SK-N-SH (cell line): ENCODE measurements at regions of chr11 and their contacts with region 1.

Region 1: DNA sequence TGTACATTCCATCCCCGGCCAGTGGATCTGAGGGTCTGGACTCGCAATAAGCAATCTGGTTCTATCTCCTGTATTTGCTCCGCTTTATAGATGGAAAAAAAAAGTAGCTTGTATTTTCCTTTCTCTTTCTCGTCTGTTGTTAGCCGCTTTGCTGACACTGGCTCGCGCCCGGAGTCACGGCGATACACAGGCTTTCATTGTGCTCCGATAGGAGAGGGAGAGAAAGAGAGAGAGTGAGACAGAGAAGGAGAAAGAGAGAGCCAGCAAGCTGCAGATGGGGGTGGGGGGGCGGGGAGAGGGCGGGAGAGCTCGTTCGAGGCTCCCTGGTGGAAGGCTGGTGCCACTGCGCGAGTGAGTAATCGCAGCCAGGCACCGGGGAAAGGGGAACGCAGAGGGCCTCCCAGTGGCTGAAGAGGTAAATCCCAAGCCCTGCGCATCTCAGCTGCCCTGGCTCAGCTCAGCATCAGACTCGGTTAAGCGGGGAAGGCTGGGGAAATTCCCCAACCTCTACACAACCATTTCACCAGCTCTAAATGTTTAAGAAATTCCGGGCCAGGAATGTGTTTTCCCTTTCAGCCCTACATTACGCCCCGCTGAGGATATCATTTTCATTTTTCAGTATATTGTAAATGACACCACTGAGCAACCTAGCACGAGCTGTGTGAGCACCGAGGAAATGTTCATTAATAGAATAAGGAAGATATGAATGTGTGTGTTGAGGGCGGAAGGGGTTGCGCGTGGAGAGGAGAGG is at the start of gene MAML2:
- DNase-seq: peak; percentile 94
- H3K4me3 ChIP-seq: peak within 1 kb of the TSS; percentile 84 to 90
- H3K27ac ChIP-seq: peak within 1 kb of the TSS; percentile 82 to 91
- H3K4me1 ChIP-seq: peaks cover 15 to 28% of the 10 kb centered on the region in 2 experiments; a peak in 2 of 4 replicates
- H3K27me3 ChIP-seq: no peaks in the 10 kb centered on the region
- CTCF ChIP-seq: peak; percentile 73
- EP300 ChIP-seq: no peak
- RAD21 ChIP-seq: peak; percentile 91
- polyA plus RNA-seq, gene MAML2: 20.1 and 24.5 TPM in 2 replicates

Region 2: DNA sequence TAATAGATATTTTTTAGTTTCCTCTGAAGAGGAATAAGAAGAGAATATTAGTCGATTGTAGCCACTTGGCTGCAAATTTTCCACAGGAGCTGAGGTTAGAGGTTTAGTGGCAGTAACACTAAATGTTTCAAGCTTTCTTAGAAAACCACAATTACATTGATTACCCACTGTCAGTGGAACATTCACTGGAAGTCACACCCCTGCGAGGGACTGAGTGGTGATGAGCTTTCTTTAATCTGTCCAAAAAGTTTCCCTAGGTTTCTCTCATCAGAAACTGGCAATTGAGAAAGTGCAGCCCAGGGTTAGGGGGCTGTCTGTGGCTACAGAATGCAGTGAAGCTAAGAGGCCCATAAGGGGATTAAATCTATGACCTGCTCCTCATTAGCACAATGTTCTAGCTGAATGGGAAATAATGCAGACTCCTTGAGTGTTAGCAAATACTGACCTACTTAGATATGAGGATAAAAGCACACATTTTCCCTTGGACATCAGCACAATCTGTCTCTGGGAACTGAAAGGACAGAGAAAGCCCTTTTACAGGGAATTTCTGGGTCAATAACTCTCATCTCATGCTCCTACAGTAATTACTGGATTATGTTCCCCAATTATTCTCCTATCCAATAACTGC is 743.1 kb before region 1 on chr11:
- CTCF ChIA-PET with region 1: no interaction called
- POLR2A ChIA-PET with region 1: no interaction called
- DNase-seq: peak; percentile 1
- H3K4me3 ChIP-seq: no peak overlapping the region
- H3K27ac ChIP-seq: no peak overlapping the region
- H3K4me1 ChIP-seq: no peaks in the 10 kb centered on the region; a peak in 1 of 4 replicates
- H3K27me3 ChIP-seq: no peaks in the 10 kb centered on the region
- CTCF ChIP-seq: no peak
- EP300 ChIP-seq: no peak
- RAD21 ChIP-seq: no peak

Region 3: DNA sequence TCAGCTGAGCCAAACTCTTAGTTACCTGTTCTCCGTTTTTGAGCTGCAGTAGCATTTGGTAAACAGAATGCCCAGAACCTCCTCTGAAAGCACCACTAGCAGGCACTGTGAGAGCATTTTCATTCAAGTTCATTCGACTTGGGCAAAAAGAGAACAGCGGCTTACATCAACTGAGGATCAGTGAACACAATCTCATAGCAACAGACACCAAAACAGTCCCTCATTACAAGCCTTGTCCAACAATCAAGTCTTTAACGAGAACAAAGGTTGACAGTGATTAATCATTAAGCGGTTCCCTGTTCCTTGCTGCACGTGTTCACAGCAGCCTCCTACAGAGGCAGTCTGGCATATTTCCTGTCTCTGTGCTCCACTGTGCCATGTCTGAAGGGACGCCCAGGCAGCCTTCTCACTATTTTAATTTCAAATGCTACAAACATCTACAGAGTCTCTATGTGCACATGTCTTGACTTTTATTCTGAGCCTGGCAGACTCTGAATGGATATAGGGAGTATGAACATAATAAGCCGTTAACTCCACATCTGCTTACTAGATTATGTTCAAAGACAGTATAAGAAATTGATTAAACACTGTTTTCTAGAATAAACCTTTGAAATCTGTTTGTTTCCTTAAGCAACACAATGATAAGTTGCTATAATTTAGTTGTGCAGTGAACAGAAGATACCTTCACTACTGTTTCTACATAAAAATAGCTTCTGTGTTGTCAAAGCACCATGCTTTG is 330.9 kb before region 1 on chr11:
- CTCF ChIA-PET with region 1: interaction called, 27 read pairs
- POLR2A ChIA-PET with region 1: no interaction called
- DNase-seq: peak; percentile 59
- H3K4me3 ChIP-seq: no peak overlapping the region; a peak in 1 of 4 replicates
- H3K27ac ChIP-seq: peak overlapping the region; percentile 71 to 86
- H3K4me1 ChIP-seq: peaks cover 12 to 14% of the 10 kb centered on the region in 2 experiments; a peak in 3 of 4 replicates
- H3K27me3 ChIP-seq: no peaks in the 10 kb centered on the region
- CTCF ChIP-seq: peak; percentile 76
- EP300 ChIP-seq: peak in 1 of 2 experiments; percentile 44; a peak in 2 of 4 replicates
- RAD21 ChIP-seq: peak; percentile 67

Region 4: GRCh38 chr11:96054870-96055705 is 288.0 kb before region 1 on chr11:
- CTCF ChIA-PET with region 1: interaction called, 91 read pairs
- POLR2A ChIA-PET with region 1: no interaction called
- DNase-seq: peak; percentile 38
- H3K4me3 ChIP-seq: no peak overlapping the region
- H3K27ac ChIP-seq: peak overlapping the region; percentile 84 to 86
- H3K4me1 ChIP-seq: peaks cover 7 to 58% of the 10 kb centered on the region in 2 experiments
- H3K27me3 ChIP-seq: no peaks in the 10 kb centered on the region
- CTCF ChIP-seq: peak; percentile 73
- EP300 ChIP-seq: no peak
- RAD21 ChIP-seq: peak; percentile 79

Region 5: DNA sequence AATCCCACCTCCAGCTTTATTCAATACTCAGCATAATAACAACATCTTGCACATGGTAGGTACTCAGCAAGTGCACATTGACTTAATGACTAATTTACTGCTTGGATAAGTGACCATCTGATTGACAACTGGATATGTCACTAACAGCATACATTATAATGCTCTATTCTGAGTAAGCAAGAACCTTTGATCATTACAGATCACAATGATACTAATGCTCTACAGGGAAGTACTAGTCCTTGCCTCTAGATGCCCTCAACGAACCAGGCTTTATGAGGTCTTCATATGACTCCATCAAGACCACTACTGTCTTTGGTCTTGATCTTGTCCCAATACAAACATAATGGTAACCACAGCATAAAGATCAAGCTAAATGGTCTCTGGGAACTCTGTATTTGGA is 251.7 kb before region 1 on chr11:
- CTCF ChIA-PET with region 1: interaction called, 12 read pairs
- POLR2A ChIA-PET with region 1: no interaction called
- DNase-seq: no peak
- H3K4me3 ChIP-seq: no peak overlapping the region
- H3K27ac ChIP-seq: peak overlapping the region; percentile 77 to 87
- H3K4me1 ChIP-seq: peaks cover 20 to 33% of the 10 kb centered on the region in 2 experiments
- H3K27me3 ChIP-seq: no peaks in the 10 kb centered on the region
- CTCF ChIP-seq: peak; percentile 34
- EP300 ChIP-seq: no peak
- RAD21 ChIP-seq: peak; percentile 46

Region 6: DNA sequence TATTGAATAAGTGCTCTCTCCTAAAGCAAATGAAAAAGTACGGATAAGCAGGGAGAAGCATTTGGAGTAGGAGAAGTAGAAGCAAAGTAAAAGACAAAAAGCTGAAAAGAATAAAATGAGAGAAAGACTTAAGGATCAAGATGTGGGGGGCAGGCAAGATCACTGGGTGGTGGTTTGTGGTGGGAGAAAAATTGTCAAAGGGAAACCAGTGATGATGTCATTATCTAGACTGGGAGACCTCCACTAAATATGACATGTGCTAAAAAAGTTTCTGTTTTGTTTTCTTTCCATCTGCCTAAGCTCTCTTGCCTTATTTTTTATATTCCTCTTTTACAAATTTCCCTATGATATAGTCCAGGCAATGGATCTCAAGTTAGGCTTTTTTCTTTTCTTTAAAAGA is 14.7 kb after region 1 on chr11:
- CTCF ChIA-PET with region 1: interaction called, 14 read pairs
- POLR2A ChIA-PET with region 1: no interaction called
- DNase-seq: no peak
- H3K4me3 ChIP-seq: no peak overlapping the region
- H3K27ac ChIP-seq: no peak overlapping the region
- H3K4me1 ChIP-seq: no peaks in the 10 kb centered on the region
- H3K27me3 ChIP-seq: no peaks in the 10 kb centered on the region
- CTCF ChIP-seq: no peak
- EP300 ChIP-seq: no peak
- RAD21 ChIP-seq: no peak

Region 7: GRCh38 chr11:96424693-96425092 is 81.6 kb after region 1 on chr11:
- CTCF ChIA-PET with region 1: interaction called, 13 read pairs
- POLR2A ChIA-PET with region 1: no interaction called
- DNase-seq: no peak
- H3K4me3 ChIP-seq: no peak overlapping the region
- H3K27ac ChIP-seq: no peak overlapping the region
- H3K4me1 ChIP-seq: no peaks in the 10 kb centered on the region
- H3K27me3 ChIP-seq: no peaks in the 10 kb centered on the region
- CTCF ChIP-seq: no peak
- EP300 ChIP-seq: peak in 1 of 2 experiments; percentile 55; a peak in 1 of 4 replicates
- RAD21 ChIP-seq: no peak